AG04449 (cell line): ENCODE measurements at regions of chr4 and their contacts with region 1.

Region 1: GRCh38 chr4:76067652-76068286 is 6.7 kb upstream of the ART3 start:
- DNase-seq: peak; percentile 29
- H3K4me3 ChIP-seq: no peak overlapping the region
- CTCF ChIP-seq: peak; percentile 67

Region 2: DNA sequence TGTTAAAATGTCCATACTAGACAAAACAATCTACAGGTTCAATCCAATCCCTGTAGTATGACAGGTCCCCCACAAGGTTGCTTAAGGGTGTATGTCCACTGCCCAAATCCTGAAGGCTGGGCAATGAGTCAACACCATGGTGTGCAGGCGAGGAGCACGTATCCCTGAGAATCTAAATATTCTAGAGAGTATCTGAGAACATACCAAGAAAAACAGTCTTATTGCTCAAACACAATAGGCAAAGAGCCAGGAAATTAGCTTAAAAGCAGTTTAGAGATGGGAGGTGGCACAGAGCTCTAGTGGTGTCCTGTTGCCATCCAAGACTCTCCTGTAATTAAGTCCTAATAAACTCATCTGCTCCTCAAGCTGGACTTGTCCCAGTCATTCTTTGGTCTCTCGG is 590.6 kb before region 1 on chr4:
- CTCF ChIA-PET with region 1: no interaction called
- POLR2A ChIA-PET with region 1: no interaction called
- DNase-seq: no peak
- H3K4me3 ChIP-seq: no peak overlapping the region
- CTCF ChIP-seq: no peak

Region 3: DNA sequence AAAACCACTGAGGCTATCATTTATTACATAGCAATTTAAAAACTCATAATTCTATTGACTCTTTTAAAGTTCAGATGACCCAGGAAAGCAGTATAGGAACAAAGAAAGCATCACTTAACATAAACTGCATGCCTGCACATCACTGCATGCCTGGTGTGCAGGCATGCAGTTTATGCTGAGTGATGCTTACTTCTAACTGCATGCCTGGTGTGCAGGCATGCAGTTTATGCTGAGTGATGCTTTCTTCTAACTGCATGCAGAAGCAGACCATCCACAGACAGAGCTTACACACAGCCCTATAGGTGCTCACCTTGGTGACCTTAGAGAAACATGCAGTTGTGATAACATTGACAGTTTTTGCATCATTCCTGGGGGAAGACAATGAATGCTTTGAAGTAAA is 94.0 kb before region 1 on chr4:
- CTCF ChIA-PET with region 1: no interaction called
- POLR2A ChIA-PET with region 1: no interaction called
- DNase-seq: no peak
- H3K4me3 ChIP-seq: no peak overlapping the region
- CTCF ChIP-seq: no peak

Region 4: DNA sequence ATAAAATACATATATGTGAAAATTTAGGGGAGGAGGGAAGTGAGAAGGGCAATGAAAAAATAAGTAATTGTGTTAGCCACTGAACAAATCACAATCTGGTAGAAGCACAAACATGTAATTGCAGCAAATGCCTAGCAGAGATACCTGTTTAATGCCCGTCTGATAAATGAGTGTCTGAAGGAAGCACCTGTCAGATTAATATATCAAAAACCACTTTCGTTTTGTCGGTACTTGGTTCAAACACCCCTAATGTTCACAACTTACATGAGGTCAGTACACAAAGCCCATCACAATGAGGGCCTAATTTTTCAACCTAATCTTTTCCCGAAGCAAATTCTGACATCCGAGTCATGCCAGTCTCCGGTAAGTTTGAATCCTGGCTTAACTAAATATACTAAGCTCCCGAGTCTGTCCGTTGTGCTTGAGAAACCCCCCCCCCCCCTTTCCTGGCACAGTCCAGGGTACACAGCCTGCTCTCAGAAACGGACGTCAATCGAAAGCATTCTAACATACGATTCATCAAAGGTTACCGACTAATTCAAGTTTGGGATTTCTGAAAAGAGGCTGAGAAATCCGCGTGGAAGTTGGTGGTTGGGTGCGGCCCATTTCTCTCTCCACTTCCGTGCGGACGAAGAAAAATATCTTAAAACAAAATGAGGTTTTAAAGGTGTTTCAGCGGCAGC is 77.8 kb before region 1 on chr4:
- CTCF ChIA-PET with region 1: interaction called, 153 read pairs
- POLR2A ChIA-PET with region 1: no interaction called
- DNase-seq: no peak
- H3K4me3 ChIP-seq: peak overlapping the region; percentile 89
- CTCF ChIP-seq: no peak

Region 5: DNA sequence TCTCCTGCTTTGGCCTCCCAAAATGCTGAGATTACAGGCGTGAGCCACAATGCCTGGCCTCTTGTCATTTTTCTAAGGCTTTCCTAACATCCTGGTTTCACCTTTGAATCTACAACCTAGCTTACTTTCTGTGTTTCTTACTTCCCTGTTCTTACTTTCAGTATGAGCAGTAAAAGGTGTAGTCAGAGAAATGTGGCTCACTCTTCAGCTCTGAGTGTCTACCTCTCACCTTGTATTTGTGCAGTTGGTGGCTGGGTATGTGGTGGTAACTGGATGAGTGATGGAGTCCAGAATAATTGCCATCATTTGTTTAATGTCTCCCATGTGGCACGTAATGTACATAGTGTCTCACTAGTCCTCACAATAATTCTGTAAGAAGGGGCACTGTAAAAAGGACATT is 12.8 kb before region 1 on chr4:
- CTCF ChIA-PET with region 1: interaction called, 14 read pairs
- POLR2A ChIA-PET with region 1: no interaction called
- DNase-seq: no peak
- H3K4me3 ChIP-seq: no peak overlapping the region
- CTCF ChIP-seq: no peak

Region 6: GRCh38 chr4:76257824-76258223 is 190.1 kb after region 1 on chr4:
- CTCF ChIA-PET with region 1: no interaction called
- POLR2A ChIA-PET with region 1: no interaction called
- DNase-seq: no peak
- H3K4me3 ChIP-seq: no peak overlapping the region
- CTCF ChIP-seq: no peak